ENCODE measurements at regions of chr20 and their contacts with region 1.

Region 1: DNA sequence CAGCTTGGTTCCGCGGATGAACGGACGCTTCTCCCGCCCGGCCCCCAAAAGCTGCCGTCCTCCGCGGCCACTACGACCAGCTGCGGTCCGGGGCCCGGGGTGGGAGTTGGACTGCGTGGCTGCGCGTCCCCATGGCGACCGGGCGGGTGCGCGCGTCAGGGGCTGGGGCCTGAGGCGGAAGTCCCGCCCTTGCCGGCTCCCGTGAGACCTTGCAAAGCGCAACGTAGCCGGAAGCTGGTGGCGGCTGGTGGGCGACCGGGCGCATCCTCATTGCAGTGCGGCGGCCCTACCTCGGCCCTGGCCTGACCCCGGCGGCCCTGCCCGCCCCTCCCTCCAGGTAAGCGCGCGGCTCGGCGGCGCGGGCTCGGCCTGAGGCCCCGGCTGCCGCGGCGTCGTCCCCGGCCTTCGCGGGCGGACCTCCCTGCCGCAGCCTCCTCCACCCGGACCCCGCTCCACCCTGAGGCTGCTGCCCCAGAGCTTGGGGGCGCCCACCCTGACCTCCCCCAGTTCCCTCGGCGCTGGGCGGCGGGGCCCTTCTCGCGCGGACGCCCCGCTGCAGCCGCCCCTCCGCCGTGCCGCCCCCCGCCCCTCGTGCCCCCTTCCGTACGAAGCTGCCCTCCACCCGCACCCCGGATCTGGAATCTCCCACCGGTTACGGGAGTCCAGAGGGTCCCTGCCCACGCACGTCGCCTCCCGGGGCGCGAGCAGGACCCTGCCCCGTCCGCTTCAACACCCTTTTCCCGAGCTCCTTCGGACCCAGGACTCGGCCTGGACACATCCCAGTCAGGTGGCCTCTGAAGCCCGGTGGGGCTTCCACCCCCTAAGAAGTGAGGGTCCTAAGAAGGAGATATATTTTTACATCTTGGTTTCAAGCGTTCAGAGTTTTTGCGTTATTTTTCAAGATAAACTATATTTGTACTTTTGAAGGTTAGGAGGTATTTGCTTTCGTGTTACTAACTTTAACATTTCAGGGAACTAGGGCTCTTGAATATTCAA is at the start of gene ARFGAP1:
- DNase-seq: peak; percentile 61
- ATAC-seq: peak; percentile 93
- H3K4me3 ChIP-seq: peak within 1 kb of the TSS; percentile 98 to 99
- H3K27ac ChIP-seq: peak within 1 kb of the TSS; percentile 72
- H3K4me1 ChIP-seq: peaks cover 10 to 30% of the 10 kb centered on the region in 2 experiments
- H3K27me3 ChIP-seq: no peaks in the 10 kb centered on the region
- CTCF ChIP-seq: no peak
- POLR2A ChIP-seq: peak; percentile 38
- RAD21 ChIP-seq: no peak
- total RNA-seq, gene ARFGAP1: 94.4 TPM

Region 2: DNA sequence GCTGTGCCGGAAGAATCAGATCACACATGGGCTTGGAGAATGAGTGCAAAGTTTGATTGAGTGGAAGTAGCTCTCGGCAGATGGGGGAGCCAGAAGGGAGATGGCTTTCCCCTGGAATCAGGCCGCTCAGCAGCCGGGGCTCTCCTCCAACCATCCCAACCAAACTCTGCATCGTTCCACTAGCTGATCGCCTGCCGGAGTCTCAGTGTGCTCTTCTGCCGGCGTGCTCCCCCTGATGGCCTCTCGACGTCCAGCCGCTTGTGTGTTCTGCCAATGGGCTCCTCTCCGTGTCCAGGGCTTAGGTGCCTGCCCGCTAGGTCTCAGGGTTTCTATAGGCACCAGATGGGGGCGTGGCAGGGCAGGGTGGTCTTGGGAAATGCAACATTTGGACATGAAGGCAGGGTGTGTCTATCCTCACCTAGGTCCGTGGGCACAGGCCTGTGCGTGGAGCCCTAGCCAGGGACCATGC is 42.0 kb before region 1 on chr20:
- CTCF ChIA-PET with region 1: no interaction called
- POLR2A ChIA-PET with region 1: interaction called, 3 read pairs
- RAD21 ChIA-PET with region 1: no interaction called
- intact Hi-C with region 1: loop called (anchors 5 kb)
- DNase-seq: no peak
- ATAC-seq: no peak
- H3K4me3 ChIP-seq: no peak overlapping the region
- H3K27ac ChIP-seq: no peak overlapping the region; the same call in 1 of the 2 replicates
- H3K4me1 ChIP-seq: peaks cover 41 to 67% of the 10 kb centered on the region in 2 experiments
- H3K27me3 ChIP-seq: no peaks in the 10 kb centered on the region
- CTCF ChIP-seq: no peak
- POLR2A ChIP-seq: no peak
- RAD21 ChIP-seq: no peak

Measured in HCT116 (cell line).